Activated T-helper 2 cell treated with anti-CD3 and anti-CD28 coated beads, Interferon-gamma antibody, Interleukin-2, Interleukin-4, amounts not matched to agents 10 μg/mL and 5 μg/mL and 100 μg/mL, durations not matched to agents 14 hours and 24 hours and 36 hours (primary cell): ENCODE measurements at regions of chr3 and their contacts with region 1.

Region 1: DNA sequence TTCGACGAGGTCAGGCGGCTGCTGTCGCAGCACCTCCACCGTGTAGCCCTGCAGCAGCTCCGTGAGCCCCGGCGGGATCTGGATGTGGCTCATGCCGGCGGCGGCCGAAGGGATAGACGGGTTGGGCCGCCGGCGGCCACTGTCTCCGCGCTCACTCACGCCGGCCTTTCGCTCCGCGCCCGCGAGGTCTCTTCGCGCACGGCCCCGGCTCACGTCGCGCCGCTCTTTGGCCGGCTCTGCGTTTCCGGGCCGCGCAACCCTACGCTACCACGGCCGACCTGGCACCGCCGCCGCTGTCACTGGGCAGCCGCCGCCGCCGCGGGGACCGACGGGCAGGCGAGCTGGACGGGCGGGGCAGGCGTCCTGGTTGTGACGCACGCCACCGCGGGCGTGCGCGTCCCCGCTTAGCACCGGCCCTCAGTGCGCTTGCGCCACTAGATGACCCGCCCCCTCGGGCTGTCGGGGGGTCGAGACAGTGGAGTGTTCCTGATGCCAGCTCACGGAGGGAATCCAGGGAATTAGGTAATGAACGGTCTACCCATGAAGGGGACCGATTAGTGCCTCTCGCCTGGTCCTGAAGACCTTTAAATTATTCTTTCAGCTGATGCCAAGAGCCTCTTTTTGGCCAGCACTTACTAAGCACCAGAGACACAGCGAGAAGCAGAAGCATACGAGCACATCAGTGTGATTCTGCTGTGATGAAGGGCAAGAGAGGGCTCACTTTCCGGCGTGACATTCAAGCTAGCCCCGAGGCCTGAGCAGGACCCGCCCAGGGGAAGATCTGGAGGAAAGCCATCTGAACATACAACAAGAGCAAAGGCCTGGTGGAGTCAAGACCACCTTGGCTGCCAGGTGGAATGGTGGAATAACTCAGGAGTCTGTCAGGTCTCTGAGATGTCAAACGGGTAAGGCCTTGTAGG is at the start of gene PRKAR2A:
- DNase-seq: peak; percentile 79
- H3K4me3 Mint-ChIP-seq: peak within 1 kb of the TSS; percentile 82
- H3K27ac Mint-ChIP-seq: peak within 1 kb of the TSS; percentile 90
- H3K4me1 Mint-ChIP-seq: peaks cover 21% of the 10 kb centered on the region
- H3K27me3 Mint-ChIP-seq: no peaks in the 10 kb centered on the region
- total RNA-seq, gene PRKAR2A: 30.7 and 32.4 TPM in 2 replicates

Region 2: DNA sequence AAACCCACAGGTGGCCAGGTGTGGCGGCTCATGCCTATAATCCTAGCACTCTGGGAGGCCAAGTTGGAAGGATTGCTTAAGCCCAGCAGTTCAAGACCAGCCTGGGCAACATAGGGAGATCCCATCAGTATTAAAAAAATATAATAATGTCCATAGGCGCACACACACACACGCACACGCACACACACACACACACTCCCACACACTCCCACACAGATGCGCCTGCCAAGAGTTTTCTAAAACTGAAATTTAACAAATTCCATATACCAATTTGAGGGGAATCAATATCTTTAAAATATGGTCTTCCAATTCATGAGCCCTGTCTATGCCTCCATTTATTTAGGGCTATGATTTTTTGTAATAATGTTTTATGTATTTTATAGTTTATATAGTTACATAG is 360.8 kb before region 1 on chr3:
- intact Hi-C with region 1: no loop called
- DNase-seq: no peak
- H3K4me3 Mint-ChIP-seq: no peak overlapping the region
- H3K27ac Mint-ChIP-seq: no peak overlapping the region
- H3K4me1 Mint-ChIP-seq: no peaks in the 10 kb centered on the region
- H3K27me3 Mint-ChIP-seq: no peaks in the 10 kb centered on the region

Region 3: GRCh38 chr3:48898383-48899234 is 50.8 kb after region 1 on chr3 and contains the start of gene SLC25A20:
- intact Hi-C with region 1: loop called (anchors 5 kb)
- DNase-seq: peak; percentile 89
- H3K4me3 Mint-ChIP-seq: peak within 1 kb of the TSS; percentile 90
- H3K27ac Mint-ChIP-seq: peak within 1 kb of the TSS; percentile 94
- H3K4me1 Mint-ChIP-seq: peaks cover 33% of the 10 kb centered on the region
- H3K27me3 Mint-ChIP-seq: no peaks in the 10 kb centered on the region
- total RNA-seq, gene SLC25A20: 16.2 and 19.0 TPM in 2 replicates